PC-9 (cell line): ENCODE measurements at regions of chr1 and their contacts with region 1.

Region 1: DNA sequence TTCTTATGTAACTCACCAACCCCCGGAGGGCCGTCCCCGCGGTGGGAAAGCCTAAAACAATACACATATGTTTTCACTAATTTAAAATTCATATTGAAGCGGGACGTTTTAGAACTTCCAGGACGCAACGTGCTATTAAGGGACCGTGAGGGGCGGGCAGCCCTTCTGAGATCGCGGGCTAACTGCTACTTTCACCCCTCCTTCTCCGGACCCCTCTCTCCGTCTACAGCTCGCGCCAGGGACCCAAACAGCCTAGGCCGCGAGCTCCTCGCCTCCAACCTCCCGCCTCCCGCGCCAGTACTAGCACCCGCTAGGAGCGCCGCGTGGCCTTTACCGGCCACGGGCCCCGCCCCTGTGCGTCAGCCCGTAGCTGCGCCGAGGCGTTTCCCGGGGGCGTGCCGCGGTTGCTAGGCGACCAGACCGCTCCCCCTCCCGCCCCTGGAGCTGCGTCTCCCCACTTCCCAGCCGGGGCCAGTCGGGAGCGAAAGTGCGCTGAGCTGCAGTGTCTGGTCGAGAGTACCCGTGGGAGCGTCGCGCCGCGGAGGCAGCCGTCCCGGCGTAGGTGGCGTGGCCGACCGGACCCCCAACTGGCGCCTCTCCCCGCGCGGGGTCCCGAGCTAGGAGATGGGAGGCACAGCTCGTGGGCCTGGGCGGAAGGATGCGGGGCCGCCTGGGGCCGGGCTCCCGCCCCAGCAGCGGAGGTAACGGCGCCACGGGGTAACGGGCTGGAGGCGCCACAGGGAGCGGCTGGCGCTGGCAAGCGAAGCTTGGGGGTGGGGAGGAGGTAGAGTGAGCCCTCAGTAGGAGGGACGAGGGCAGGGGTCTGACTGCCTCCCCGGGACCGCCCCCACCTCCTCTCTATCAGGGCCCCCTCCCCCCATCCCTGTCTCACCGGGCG is at the start of gene DYRK3:
- DNase-seq: peak; percentile 64 to 95
- H3K4me3 ChIP-seq: peak within 1 kb of the TSS; percentile 80
- H3K27ac ChIP-seq: no peak within 1 kb of the TSS
- H3K4me1 ChIP-seq: peaks cover 10% of the 10 kb centered on the region
- H3K27me3 ChIP-seq: no peaks in the 10 kb centered on the region
- CTCF ChIP-seq: no peak
- total RNA-seq, gene DYRK3: 3.3 and 3.9 TPM in 2 replicates

Region 2: DNA sequence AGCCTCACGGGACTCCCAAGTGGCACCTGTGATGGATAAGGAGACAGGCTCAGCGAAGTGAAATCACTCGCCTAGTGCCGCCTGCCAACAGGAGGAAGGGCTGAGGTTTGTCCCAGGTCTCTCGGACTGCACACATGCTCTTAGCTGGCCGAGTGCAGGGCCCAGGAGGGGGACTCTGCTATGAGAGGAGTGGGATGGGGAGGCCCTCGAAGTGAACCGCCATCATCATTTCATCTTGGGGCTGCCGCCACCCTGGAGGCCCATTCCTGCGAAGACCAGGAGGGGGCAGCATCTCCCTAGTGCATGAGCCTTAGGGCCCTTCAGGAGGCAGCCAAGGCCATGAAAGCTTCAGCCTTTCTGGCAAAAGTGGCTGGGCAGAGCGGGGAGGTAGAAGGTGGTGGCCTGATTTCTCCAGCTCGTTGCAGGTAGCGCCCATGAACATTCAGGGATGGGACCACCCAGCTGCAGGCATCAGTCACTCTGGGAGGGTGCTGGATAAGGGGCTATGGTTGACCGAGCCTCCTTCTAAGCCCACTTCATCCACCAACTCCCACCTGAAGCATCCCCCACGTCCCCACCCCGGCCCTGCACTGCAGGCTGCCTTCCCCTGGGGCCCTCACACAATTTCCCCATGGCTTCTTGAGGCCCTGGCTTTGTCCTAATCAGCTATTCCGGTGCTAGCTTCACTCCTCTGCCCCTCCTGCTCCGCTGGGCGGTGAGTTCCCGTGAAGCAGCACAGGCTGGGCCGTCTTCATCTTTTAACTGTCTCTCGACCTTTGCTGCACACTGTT is 145.2 kb before region 1 on chr1:
- CTCF ChIA-PET with region 1: interaction called, 10 read pairs
- POLR2A ChIA-PET with region 1: no interaction called
- intact Hi-C with region 1: no loop called
- DNase-seq: peak; percentile 51 to 71
- H3K4me3 ChIP-seq: no peak overlapping the region
- H3K27ac ChIP-seq: no peak overlapping the region
- H3K4me1 ChIP-seq: no peaks in the 10 kb centered on the region
- H3K27me3 ChIP-seq: no peaks in the 10 kb centered on the region
- CTCF ChIP-seq: peak; percentile 91

Region 3: DNA sequence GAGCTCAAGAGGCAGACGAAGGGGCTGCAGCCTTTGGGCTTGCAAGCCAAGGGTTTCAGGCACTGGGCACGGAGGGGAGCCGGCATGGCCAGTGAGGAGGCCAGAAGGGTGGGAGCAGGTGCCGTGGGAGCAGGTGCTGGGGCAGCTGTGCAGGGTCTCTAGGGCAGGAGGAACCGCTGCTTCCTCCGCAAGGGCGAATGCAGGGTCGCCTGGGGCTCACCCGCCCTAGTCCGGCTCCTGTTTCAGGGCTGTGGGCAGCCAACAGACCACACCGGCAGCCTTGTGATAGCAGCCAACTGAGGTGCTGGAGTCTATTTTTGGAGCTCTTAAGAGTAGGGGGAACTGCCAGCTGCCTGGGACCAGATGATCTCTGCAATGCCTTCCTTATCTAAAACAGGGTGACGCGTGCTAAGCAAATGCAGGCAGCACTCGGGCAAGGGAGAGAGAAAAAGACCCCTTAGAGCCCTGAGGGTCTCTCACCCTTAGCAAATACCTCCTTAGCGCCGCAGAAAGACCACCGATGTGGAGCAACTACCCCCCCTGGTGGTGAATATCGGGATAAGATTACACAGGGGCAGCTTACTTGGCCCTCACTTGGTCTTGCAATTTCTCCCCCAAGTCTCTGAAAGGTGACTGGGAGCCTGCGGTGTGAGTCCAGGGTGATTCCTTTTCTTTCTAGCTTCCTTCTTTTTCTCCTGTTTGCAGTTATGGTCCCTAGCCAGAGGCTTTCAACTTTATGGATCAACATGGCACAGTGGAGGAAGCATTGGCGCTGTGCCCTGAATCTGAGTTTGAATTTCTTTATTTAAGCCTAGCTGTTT is 28.7 kb after region 1 on chr1:
- CTCF ChIA-PET with region 1: interaction called, 12 read pairs
- POLR2A ChIA-PET with region 1: no interaction called
- intact Hi-C with region 1: loop called (anchors 1 kb)
- DNase-seq: peak in 1 of 2 experiments; percentile 59
- H3K4me3 ChIP-seq: no peak overlapping the region
- H3K27ac ChIP-seq: no peak overlapping the region
- H3K4me1 ChIP-seq: no peaks in the 10 kb centered on the region
- H3K27me3 ChIP-seq: 0 out of 2 replicates have a peak, but pooled peaks cover 8% of the 10 kb centered on the region
- CTCF ChIP-seq: peak; percentile 94

Region 4: DNA sequence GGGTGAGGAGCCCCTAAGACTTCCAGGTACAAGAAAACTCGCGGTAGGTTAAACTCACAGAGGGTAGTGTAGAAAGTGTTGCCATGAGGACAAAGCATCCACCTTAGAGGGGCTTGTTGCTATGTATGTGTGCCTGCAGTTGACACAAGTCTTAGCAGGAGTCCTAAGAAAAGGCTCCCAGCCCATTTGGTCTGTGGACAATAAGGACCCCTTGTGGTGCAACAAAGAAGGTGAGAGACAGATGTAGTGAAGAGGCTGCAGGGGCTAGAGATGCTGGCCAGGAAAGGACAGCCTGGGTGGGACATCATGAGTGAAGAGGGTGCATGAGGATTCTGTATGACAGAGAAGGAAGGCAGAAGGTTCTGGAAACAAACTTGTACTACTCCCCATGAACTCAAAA is 173.3 kb after region 1 on chr1:
- CTCF ChIA-PET with region 1: no interaction called
- POLR2A ChIA-PET with region 1: no interaction called
- intact Hi-C with region 1: loop called (anchors 5 kb)
- DNase-seq: no peak
- H3K4me3 ChIP-seq: no peak overlapping the region
- H3K27ac ChIP-seq: no peak overlapping the region
- H3K4me1 ChIP-seq: no peaks in the 10 kb centered on the region
- H3K27me3 ChIP-seq: 0 out of 2 replicates have a peak, but pooled peaks cover 5% of the 10 kb centered on the region
- CTCF ChIP-seq: peak; percentile 37; the same call in 1 of the 2 replicates

Region 5: GRCh38 chr1:207025144-207025880 is 390.0 kb after region 1 on chr1:
- CTCF ChIA-PET with region 1: no interaction called
- POLR2A ChIA-PET with region 1: no interaction called
- intact Hi-C with region 1: no loop called
- DNase-seq: peak; percentile 80 to 90
- H3K4me3 ChIP-seq: no peak overlapping the region
- H3K27ac ChIP-seq: peak overlapping the region; percentile 97
- H3K4me1 ChIP-seq: peaks cover 90% of the 10 kb centered on the region
- H3K27me3 ChIP-seq: no peaks in the 10 kb centered on the region
- CTCF ChIP-seq: no peak

Region 6: GRCh38 chr1:207499573-207499972 is 864.2 kb after region 1 on chr1:
- CTCF ChIA-PET with region 1: no interaction called
- POLR2A ChIA-PET with region 1: no interaction called
- intact Hi-C with region 1: loop called (anchors 5 kb)
- DNase-seq: peak; percentile 62 to 64
- H3K4me3 ChIP-seq: no peak overlapping the region
- H3K27ac ChIP-seq: no peak overlapping the region
- H3K4me1 ChIP-seq: no peaks in the 10 kb centered on the region
- H3K27me3 ChIP-seq: peaks cover 28% of the 10 kb centered on the region
- CTCF ChIP-seq: peak; percentile 87